ENCODE measurements at regions of chr6 and their contacts with region 1.

Region 1: GRCh38 chr6:3742426-3743344 is 8.8 kb downstream of the PXDC1 start:
- DNase-seq: peak; percentile 85
- H3K4me3 ChIP-seq: peak overlapping the region; percentile 57
- H3K27ac ChIP-seq: peak overlapping the region; percentile 66
- H3K4me1 ChIP-seq: peaks cover 92% of the 10 kb centered on the region
- H3K27me3 ChIP-seq: no peaks in the 10 kb centered on the region

Region 2: GRCh38 chr6:3887150-3887700 is 144.5 kb after region 1 on chr6:
- in situ Hi-C with region 1: loop called (anchors 10 kb)
- DNase-seq: peak; percentile 72
- H3K4me3 ChIP-seq: no peak overlapping the region
- H3K27ac ChIP-seq: no peak overlapping the region
- H3K4me1 ChIP-seq: peaks cover 30% of the 10 kb centered on the region
- H3K27me3 ChIP-seq: no peaks in the 10 kb centered on the region

Region 3: GRCh38 chr6:3987053-3987452 is 244.4 kb after region 1 on chr6:
- in situ Hi-C with region 1: loop called (anchors 10 kb)
- DNase-seq: no peak
- H3K4me3 ChIP-seq: no peak overlapping the region
- H3K27ac ChIP-seq: no peak overlapping the region
- H3K4me1 ChIP-seq: 0 out of 2 replicates have a peak, but pooled peaks cover 3% of the 10 kb centered on the region
- H3K27me3 ChIP-seq: no peaks in the 10 kb centered on the region

Measured in GM23248 (cell line).